BJ (cell line): ENCODE measurements at regions of chr19 and their contacts with region 1.

Region 1: GRCh38 chr19:51158474-51159129 is 16.5 kb downstream of the SIGLEC7 start:
- DNase-seq: no peak
- H3K4me3 ChIP-seq: no peak overlapping the region
- H3K27me3 ChIP-seq: no peaks in the 10 kb centered on the region
- CTCF ChIP-seq: peak; percentile 54

Region 2: DNA sequence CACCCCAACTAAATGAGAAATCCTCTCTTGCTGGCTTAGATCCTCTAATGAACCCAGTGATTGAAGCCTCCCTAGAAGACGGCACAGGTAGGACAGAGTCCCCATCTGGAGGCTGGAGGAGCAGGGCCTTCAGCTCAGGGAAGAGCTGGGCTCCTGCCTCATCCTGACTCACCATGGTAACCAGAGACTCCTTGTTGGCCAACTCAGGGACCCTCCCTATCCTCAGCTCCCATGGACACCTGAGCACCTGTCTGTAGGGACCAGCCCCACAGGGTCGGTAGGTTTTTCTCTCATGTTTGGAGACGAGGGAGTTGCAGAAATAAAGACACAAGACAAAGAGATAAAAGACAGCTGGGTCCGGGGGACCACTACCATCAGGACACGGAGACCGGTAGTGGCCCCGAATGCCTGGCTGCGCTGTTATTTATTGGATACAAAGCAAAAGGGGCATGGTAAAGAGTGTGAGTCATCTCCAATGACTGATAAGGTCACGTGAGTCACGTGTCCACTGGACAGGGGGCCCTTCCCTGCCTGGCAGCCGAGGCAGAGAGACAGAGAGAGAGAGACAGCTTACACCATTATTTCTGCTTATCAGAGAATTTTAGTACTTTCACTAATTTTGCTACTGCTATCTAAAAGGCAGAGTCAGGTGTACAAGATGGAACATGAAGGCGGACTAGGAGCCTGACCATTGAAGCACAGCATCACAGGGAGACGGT is 10.1 kb after region 1 on chr19:
- CTCF ChIA-PET with region 1: interaction called, 10 read pairs
- POLR2A ChIA-PET with region 1: no interaction called
- DNase-seq: no peak
- H3K4me3 ChIP-seq: no peak overlapping the region
- H3K27me3 ChIP-seq: no peaks in the 10 kb centered on the region
- CTCF ChIP-seq: no peak

Region 3: DNA sequence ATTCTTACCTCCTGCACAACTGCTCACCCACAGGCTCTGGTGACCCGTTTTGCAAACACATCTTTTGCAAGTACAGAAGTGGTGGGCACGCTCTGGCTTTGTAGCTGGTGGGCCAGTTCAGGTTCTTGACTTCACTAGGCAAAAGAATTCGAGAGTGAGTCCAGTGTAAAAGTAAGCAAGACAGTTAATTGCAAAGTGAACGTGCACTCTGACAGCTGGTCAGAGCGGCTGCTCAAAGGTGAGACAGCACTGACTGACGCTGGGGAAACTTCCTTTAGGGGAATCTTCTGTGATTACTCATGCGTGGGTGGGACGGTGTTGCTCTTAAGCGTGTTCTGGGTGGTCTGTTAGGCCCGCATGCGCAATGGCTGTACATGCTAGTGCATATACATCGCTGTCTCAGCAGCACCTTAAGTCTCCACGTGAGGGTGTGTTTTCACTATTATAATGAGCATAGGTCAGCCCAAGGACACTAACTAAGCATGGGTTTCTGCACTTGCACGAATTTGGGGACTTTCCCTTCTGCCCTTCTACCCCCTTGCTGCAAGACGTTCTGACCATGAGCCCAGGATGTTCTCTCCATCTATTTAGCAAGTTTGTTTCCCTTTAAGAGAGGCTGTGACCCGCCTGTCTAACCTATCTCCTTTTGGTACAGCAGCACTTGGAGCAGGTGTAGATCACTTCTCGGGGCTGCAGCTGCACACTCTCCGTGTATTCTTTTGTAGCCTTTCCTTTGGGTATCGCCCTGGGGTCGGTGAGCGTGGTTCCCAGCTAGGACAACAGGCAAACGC is 36.1 kb after region 1 on chr19:
- CTCF ChIA-PET with region 1: no interaction called
- POLR2A ChIA-PET with region 1: no interaction called
- DNase-seq: no peak
- H3K4me3 ChIP-seq: no peak overlapping the region
- H3K27me3 ChIP-seq: no peaks in the 10 kb centered on the region
- CTCF ChIP-seq: no peak